ENCODE measurements at regions of chr21 and their contacts with region 1.

Region 1: GRCh38 chr21:37711836-37712568 is 204.3 kb downstream of the KCNJ6 start:
- DNase-seq: peak; percentile 68
- H3K4me3 Mint-ChIP-seq: no peak overlapping the region
- H3K27ac Mint-ChIP-seq: no peak overlapping the region
- H3K4me1 Mint-ChIP-seq: no peaks in the 10 kb centered on the region
- H3K27me3 Mint-ChIP-seq: peaks cover 21% of the 10 kb centered on the region
- CTCF ChIP-seq: peak; percentile 71

Region 2: GRCh38 chr21:37220981-37221664 is 490.9 kb before region 1 on chr21:
- CTCF ChIA-PET with region 1: no interaction called
- intact Hi-C with region 1: no loop called
- DNase-seq: peak; percentile 92
- H3K4me3 Mint-ChIP-seq: peak overlapping the region; percentile 95
- H3K27ac Mint-ChIP-seq: peak overlapping the region; percentile 91
- H3K4me1 Mint-ChIP-seq: no peaks in the 10 kb centered on the region
- H3K27me3 Mint-ChIP-seq: no peaks in the 10 kb centered on the region
- CTCF ChIP-seq: no peak

Region 3: DNA sequence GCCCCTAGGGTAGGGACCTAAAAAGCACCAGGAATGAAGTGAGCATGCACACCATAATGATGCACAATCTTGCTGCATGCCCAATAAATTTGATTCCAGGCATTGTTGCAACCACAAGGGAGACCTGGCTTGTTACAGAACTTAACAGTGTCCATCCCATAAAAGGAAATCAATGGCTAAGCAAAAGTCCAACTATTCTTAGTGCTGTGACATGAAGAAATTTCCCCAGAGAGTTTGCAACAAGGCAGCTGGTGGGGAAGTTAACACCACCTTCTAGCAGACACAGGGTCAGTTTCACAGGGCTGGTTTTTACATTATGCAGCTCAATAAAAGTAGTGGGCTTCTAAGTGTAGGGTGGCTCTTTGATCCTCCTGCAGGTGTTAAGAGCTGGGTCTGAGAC is 16.9 kb before region 1 on chr21:
- CTCF ChIA-PET with region 1: interaction called, 11 read pairs
- intact Hi-C with region 1: no loop called
- DNase-seq: no peak
- H3K4me3 Mint-ChIP-seq: no peak overlapping the region
- H3K27ac Mint-ChIP-seq: no peak overlapping the region
- H3K4me1 Mint-ChIP-seq: no peaks in the 10 kb centered on the region
- H3K27me3 Mint-ChIP-seq: peaks cover 44% of the 10 kb centered on the region
- CTCF ChIP-seq: no peak

Region 4: DNA sequence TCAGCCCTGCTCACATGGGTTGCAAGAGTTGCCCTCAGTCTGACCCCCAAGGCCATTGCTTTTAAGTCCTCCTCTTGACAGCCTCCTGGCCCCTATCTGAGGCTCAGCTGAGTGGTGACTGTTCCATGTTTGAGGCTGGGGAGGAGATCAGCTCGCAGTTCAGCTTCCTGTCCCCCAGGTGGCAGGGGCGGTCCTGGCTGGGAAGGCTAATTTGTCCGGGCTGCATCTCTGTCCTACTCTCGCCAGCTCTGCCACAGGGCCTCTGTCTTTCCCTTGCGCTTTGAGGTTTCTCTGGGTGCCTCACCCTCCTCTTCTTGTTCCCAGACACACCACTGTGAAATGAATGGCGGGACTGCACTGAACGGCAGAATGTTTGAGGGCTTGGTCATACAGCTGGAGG is 47.0 kb after region 1 on chr21:
- CTCF ChIA-PET with region 1: interaction called, 3 read pairs
- intact Hi-C with region 1: loop called (anchors 5 kb)
- DNase-seq: peak; percentile 56
- H3K4me3 Mint-ChIP-seq: no peak overlapping the region
- H3K27ac Mint-ChIP-seq: no peak overlapping the region
- H3K4me1 Mint-ChIP-seq: peaks cover 8% of the 10 kb centered on the region
- H3K27me3 Mint-ChIP-seq: peaks cover 27% of the 10 kb centered on the region
- CTCF ChIP-seq: no peak

Region 5: GRCh38 chr21:37855635-37856625 is 143.9 kb after region 1 on chr21:
- CTCF ChIA-PET with region 1: no interaction called
- intact Hi-C with region 1: no loop called
- DNase-seq: no peak
- H3K4me3 Mint-ChIP-seq: no peak overlapping the region
- H3K27ac Mint-ChIP-seq: no peak overlapping the region
- H3K4me1 Mint-ChIP-seq: no peaks in the 10 kb centered on the region
- H3K27me3 Mint-ChIP-seq: peaks cover 77% of the 10 kb centered on the region
- CTCF ChIP-seq: no peak

Region 6: DNA sequence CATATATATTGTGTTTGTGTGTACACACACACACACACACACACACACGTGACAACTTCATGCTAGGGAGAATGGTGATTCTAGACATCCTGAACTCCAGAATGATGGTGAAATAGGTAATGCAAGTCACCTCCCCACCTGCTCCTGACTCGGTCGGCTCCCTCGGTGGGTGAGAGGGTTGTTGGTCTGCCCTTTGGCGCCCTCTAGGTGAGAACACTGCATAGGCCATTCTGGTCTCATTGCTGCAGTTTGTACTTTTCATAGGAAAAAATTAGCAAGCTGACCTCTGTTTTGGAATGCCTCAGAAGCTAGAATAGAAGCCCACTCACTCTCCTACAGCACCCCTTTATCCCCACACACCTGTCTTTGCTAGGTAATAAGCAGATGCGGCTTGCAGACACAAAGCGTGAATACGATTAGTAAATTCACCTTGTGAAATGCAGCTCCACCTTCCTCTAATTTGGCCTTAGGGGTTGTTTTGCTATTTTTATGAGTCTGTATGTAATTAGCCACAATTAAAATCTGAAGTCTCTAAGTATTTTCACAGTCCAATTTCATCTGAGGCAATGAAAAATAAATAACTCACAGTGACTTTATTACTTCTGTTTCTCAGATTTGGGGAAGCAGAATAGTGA is 414.8 kb after region 1 on chr21:
- CTCF ChIA-PET with region 1: interaction called, 3 read pairs
- intact Hi-C with region 1: loop called (anchors 5 kb)
- DNase-seq: peak; percentile 73
- H3K4me3 Mint-ChIP-seq: no peak overlapping the region
- H3K27ac Mint-ChIP-seq: no peak overlapping the region
- H3K4me1 Mint-ChIP-seq: no peaks in the 10 kb centered on the region
- H3K27me3 Mint-ChIP-seq: peaks cover 61% of the 10 kb centered on the region
- CTCF ChIP-seq: peak; percentile 52